Endothelial cell of umbilical vein (primary cell): ENCODE measurements at regions of chr1 and their contacts with region 1.

Region 1: GRCh38 chr1:198465201-198466144 is 75.0 kb downstream of the ATP6V1G3 start:
- DNase-seq: peak; percentile 83
- H3K4me3 ChIP-seq: no peak overlapping the region
- H3K27ac ChIP-seq: peak overlapping the region; percentile 53
- H3K4me1 ChIP-seq: peaks cover 9% of the 10 kb centered on the region
- H3K27me3 ChIP-seq: no peaks in the 10 kb centered on the region
- CTCF ChIP-seq: peak; percentile 22 to 48
- POLR2A ChIP-seq: no peak

Region 2: DNA sequence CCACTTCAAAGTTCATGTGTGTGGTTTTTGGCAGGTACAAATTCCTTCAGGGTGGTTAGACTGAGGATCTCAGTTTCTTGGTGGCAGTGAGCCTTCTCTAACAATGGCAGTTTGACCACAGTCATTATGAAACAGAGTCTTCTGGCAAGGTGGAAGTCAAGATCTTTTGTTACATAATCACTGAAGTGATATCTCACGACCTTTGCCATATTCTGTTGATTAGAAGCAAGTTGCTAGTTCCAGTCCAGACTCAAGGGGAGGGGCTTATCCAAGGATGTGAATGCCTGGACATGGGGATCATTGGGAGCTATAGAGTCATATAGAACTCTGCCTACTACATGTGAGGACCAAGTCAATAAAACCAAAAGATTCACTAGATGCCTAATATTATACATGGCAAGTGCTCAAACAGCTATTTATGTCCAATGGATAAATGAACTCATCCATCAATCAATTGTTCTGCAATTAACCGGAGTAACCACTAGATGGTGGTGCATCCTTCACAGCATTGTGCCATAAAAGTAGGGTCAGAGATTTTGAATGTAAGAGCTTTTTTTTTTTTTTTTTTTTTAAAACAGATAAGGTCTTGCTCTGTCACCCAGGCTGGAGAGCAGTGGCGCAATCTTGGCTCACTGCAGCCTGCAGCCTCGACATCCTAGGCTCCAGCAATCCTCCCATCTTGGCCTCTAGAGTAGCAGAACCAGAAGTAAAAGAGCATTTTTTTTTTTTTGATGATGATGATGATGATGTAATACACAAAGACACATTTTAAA is 1065.5 kb before region 1 on chr1:
- CTCF ChIA-PET with region 1: interaction called, 5 read pairs
- POLR2A ChIA-PET with region 1: no interaction called
- dilution Hi-C with region 1: no loop called
- intact Hi-C with region 1: loop called (anchors 1 kb)
- DNase-seq: peak; percentile 60
- H3K4me3 ChIP-seq: no peak overlapping the region
- H3K27ac ChIP-seq: no peak overlapping the region
- H3K4me1 ChIP-seq: no peaks in the 10 kb centered on the region
- H3K27me3 ChIP-seq: no peaks in the 10 kb centered on the region
- CTCF ChIP-seq: peak; percentile 50 to 55
- POLR2A ChIP-seq: no peak

Region 3: GRCh38 chr1:197614916-197615692 is 850.4 kb before region 1 on chr1:
- CTCF ChIA-PET with region 1: interaction called, 19 read pairs
- POLR2A ChIA-PET with region 1: no interaction called
- dilution Hi-C with region 1: no loop called
- intact Hi-C with region 1: loop called (anchors 1 kb)
- DNase-seq: peak; percentile 55
- H3K4me3 ChIP-seq: no peak overlapping the region
- H3K27ac ChIP-seq: no peak overlapping the region
- H3K4me1 ChIP-seq: no peaks in the 10 kb centered on the region
- H3K27me3 ChIP-seq: no peaks in the 10 kb centered on the region
- CTCF ChIP-seq: peak; percentile 51 to 57
- POLR2A ChIP-seq: no peak

Region 4: DNA sequence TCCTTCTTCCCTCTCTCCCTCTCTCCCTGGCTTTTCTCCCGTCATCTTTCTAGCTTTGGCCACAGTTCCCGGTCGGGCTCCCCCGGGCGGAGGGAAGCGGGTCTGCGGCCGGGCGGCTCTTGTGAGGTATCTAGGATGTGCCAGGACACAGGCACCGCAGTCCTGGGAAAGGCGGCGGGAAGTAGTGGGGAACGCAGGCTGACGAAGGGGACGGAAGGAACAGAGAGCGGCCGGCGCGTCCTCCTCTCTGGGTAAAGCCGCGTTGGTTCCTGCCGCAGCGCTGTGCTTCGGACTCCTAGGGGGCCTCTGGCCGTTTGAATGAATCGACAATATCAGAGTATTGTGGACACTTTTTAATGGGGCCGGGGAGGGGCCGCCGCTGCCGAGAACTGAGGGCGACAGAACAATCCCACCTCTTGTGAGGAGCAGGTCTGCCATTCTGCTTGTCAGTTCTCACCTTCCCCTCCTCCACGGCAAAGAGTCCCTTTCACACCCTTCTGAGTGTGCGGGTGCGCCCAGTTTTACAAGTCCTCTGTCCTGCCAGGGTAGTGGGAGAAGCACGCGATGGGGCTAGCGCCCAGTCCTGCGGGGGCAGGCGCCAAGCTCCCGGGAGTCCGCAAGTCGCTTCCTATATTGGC is 549.5 kb before region 1 on chr1:
- CTCF ChIA-PET with region 1: no interaction called
- POLR2A ChIA-PET with region 1: no interaction called
- dilution Hi-C with region 1: no loop called
- intact Hi-C with region 1: loop called (anchors 5 kb)
- DNase-seq: peak; percentile 55
- H3K4me3 ChIP-seq: peak overlapping the region in 2 of 3 experiments; percentile 13 to 15
- H3K27ac ChIP-seq: no peak overlapping the region
- H3K4me1 ChIP-seq: peaks cover 44% of the 10 kb centered on the region
- H3K27me3 ChIP-seq: peaks cover 95 to 99% of the 10 kb centered on the region in 2 experiments
- CTCF ChIP-seq: peak; percentile 54 to 78
- POLR2A ChIP-seq: no peak

Region 5: GRCh38 chr1:198205016-198205684 is 260.3 kb before region 1 on chr1:
- CTCF ChIA-PET with region 1: no interaction called
- POLR2A ChIA-PET with region 1: no interaction called
- dilution Hi-C with region 1: no loop called
- intact Hi-C with region 1: loop called (anchors 1 kb)
- DNase-seq: no peak
- H3K4me3 ChIP-seq: no peak overlapping the region
- H3K27ac ChIP-seq: no peak overlapping the region
- H3K4me1 ChIP-seq: peaks cover 2% of the 10 kb centered on the region
- H3K27me3 ChIP-seq: no peaks in the 10 kb centered on the region
- CTCF ChIP-seq: no peak
- POLR2A ChIP-seq: no peak

Region 6: GRCh38 chr1:198359024-198359653 is 106.3 kb before region 1 on chr1:
- CTCF ChIA-PET with region 1: interaction called, 7 read pairs
- POLR2A ChIA-PET with region 1: no interaction called
- dilution Hi-C with region 1: no loop called
- intact Hi-C with region 1: loop called (anchors 1 kb)
- DNase-seq: peak; percentile 32
- H3K4me3 ChIP-seq: no peak overlapping the region
- H3K27ac ChIP-seq: no peak overlapping the region
- H3K4me1 ChIP-seq: no peaks in the 10 kb centered on the region
- H3K27me3 ChIP-seq: no peaks in the 10 kb centered on the region
- CTCF ChIP-seq: peak; percentile 27 to 36
- POLR2A ChIP-seq: no peak